Right cardiac atrium (tissue), 5 donors: ENCODE measurements at regions of chr3 and their contacts with region 1.

Region 1: GRCh38 chr3:52056968-52057805 is 816 bp upstream of the DUSP7 start:
- DNase-seq: peak; percentile 99 to 100 (median 100)
- ATAC-seq: peak; percentile 90 to 92
- H3K4me3 ChIP-seq: peak overlapping the region; percentile 91
- H3K27ac ChIP-seq: peak overlapping the region; percentile 97
- H3K4me1 ChIP-seq: peaks cover 8% of the 10 kb centered on the region
- H3K27me3 ChIP-seq: no peaks in the 10 kb centered on the region

Region 2: GRCh38 chr3:52014613-52015012 is 42.6 kb before region 1 on chr3:
- intact Hi-C with region 1: loop called in 1 of 4 experiments (anchors 5 kb)
- DNase-seq: no peak
- ATAC-seq: no peak
- H3K4me3 ChIP-seq: no peak overlapping the region
- H3K27ac ChIP-seq: no peak overlapping the region
- H3K4me1 ChIP-seq: peaks cover 23% of the 10 kb centered on the region
- H3K27me3 ChIP-seq: no peaks in the 10 kb centered on the region

Region 3: DNA sequence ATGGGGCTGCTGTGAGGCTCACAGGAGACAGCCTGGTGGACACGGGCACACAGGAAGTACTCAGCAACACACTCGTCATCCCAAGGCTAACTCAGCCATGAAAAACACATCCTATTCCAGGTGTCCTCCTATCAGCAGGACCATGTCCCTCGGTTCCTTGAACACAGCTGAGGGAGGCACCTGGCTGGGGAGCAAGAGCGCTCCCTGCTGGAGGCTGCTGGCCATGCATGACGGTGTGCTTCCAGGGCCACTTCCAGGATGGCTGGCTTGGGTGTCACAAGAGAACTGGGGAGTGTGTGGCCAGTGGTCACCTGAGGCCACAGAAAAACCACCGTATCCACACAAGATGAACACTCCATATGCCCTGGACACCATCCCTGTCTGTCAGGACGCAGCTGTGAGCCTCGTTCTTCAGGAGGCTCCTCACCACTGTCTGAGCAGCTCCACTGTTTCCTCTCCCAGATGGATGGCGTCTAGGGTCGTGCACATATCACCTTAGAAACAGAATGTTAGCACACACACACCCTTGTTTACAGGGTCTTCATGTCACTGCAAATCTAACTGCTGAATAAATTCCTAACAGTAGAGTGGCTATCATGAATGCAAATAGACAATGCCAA is 66.0 kb after region 1 on chr3:
- intact Hi-C with region 1: loop called in 3 of 4 experiments (anchors 5 kb)
- DNase-seq: peak; percentile 68 to 91 (median 90)
- ATAC-seq: peak; percentile 79
- H3K4me3 ChIP-seq: no peak overlapping the region
- H3K27ac ChIP-seq: no peak overlapping the region
- H3K4me1 ChIP-seq: peaks cover 17% of the 10 kb centered on the region
- H3K27me3 ChIP-seq: no peaks in the 10 kb centered on the region

Region 4: DNA sequence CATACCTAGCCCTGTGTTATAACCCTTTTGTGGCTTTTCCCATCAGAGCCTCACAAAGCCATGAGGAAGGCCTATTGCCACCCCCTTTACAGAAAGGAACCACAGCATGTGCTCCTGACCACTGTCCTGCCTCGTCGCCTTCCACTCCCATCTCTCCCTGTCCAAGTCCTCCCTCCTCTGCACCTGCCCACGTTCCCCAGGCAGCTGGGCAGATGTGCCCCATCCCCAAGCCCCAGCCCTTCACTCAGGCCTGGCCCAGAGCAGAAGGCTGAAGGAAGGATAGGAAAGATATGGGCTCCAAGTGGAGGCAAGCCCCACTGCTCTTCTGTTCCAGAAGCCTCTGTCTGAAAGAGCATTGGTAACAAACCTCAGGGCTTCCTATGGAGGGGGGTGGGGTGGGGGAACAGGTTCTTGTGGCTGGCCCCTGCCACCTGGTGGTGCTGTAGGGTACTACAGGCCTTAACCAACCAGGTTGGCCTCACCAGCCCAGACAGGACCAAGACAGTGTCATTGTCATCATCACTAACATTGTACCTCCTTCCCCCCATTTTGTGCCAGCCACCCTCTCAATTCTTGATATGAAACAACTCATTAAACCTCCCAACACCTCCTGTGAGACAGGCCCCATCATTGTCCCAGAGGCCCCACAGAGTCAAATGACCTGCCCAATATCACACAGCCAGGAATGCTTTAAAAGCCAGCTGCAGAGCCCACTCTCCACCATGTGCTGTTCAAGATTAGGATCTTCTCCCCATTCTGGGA is 87.0 kb after region 1 on chr3:
- intact Hi-C with region 1: loop called in 2 of 4 experiments (anchors 5 kb)
- DNase-seq: peak; percentile 86 to 95 (median 92)
- ATAC-seq: peak; percentile 71 to 75
- H3K4me3 ChIP-seq: no peak overlapping the region
- H3K27ac ChIP-seq: no peak overlapping the region
- H3K4me1 ChIP-seq: peaks cover 4% of the 10 kb centered on the region
- H3K27me3 ChIP-seq: no peaks in the 10 kb centered on the region